ENCODE measurements at regions of chr2 and their contacts with region 1.

Region 1: DNA sequence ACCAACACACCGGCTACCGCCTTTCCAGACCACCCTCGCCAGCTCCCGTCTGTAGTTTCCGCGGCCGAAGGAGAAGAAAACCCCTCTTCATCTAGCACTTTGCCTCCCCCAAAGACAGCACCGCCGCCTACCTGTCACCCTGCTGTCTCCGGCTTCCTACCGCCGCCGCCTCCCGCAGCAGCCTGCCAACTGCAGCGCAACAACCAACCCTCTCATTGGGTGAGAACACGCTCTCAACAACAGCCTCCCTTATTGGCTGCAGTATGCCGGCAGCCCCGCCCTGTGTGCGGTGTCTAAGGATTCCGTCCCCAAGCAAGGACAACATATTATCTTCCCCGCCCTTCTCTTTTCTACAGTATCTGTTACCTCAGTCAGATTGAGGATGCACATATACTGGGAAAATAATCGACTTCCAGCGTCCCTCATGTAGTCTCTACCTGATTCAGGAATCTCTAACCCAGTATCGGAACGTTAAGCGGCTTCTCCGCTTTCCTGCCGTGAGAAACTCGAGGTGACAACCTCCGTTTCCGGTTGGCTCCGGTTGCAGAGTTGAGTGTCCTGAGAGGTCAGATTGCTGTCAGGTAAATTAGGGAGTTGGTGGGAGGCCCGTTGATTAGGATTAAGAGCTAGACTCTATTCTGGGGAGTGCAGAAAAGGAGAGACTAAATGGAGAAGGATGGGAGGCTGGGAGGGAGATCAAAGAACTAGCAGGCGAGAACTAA is at the starts of genes HYCC2 and NDUFB3:
- DNase-seq: peak; percentile 93
- H3K4me3 Mint-ChIP-seq: peak within 1 kb of the TSS; percentile 81
- H3K27ac Mint-ChIP-seq: peak within 1 kb of the TSS; percentile 89
- H3K4me1 Mint-ChIP-seq: peaks cover 25% of the 10 kb centered on the region
- H3K27me3 Mint-ChIP-seq: no peaks in the 10 kb centered on the region
- CTCF ChIP-seq: no peak
- total RNA-seq, gene HYCC2: 13.7 and 13.9 TPM in 2 replicates
- total RNA-seq, gene NDUFB3: 78.0 and 94.9 TPM in 2 replicates

Region 2: GRCh38 chr2:200864176-200864976 is 207.3 kb before region 1 on chr2 and contains the start of gene CLK1:
- CTCF ChIA-PET with region 1: interaction called, 3 read pairs
- POLR2A ChIA-PET with region 1: interaction called, 32 read pairs
- intact Hi-C with region 1: no loop called
- DNase-seq: peak; percentile 91
- H3K4me3 Mint-ChIP-seq: peak within 1 kb of the TSS; percentile 86
- H3K27ac Mint-ChIP-seq: peak within 1 kb of the TSS; percentile 99
- H3K4me1 Mint-ChIP-seq: peaks cover 16% of the 10 kb centered on the region
- H3K27me3 Mint-ChIP-seq: no peaks in the 10 kb centered on the region
- CTCF ChIP-seq: no peak
- total RNA-seq, gene CLK1: 102 and 118 TPM in 2 replicates

Region 3: GRCh38 chr2:200913654-200914053 is 158.0 kb before region 1 on chr2:
- CTCF ChIA-PET with region 1: interaction called, 10 read pairs
- POLR2A ChIA-PET with region 1: interaction called, 6 read pairs
- intact Hi-C with region 1: no loop called
- DNase-seq: no peak
- H3K4me3 Mint-ChIP-seq: no peak overlapping the region
- H3K27ac Mint-ChIP-seq: no peak overlapping the region
- H3K4me1 Mint-ChIP-seq: no peaks in the 10 kb centered on the region
- H3K27me3 Mint-ChIP-seq: no peaks in the 10 kb centered on the region
- CTCF ChIP-seq: no peak

Region 4: DNA sequence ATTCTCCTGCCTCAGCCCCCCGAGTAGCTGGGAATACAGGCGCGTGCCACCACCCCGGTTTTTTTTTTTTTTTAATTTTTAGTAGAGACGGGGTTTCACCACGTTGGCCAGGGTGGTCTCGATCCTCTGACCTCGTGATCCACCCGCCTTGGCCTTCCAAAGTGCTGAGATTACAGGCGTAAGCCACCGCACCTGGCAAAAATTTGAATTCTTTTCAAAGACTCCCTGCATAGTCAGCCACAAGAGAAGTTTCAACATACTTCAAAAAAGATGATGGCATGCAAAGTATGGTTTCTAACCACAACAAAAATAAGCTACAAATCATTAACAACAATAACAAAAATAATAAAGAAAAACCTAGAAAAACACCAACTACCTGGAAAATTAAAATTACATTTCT is 22.2 kb before region 1 on chr2:
- CTCF ChIA-PET with region 1: interaction called, 14 read pairs
- POLR2A ChIA-PET with region 1: interaction called, 4 read pairs
- intact Hi-C with region 1: no loop called
- DNase-seq: no peak
- H3K4me3 Mint-ChIP-seq: no peak overlapping the region
- H3K27ac Mint-ChIP-seq: no peak overlapping the region
- H3K4me1 Mint-ChIP-seq: no peaks in the 10 kb centered on the region
- H3K27me3 Mint-ChIP-seq: no peaks in the 10 kb centered on the region
- CTCF ChIP-seq: no peak

Region 5: DNA sequence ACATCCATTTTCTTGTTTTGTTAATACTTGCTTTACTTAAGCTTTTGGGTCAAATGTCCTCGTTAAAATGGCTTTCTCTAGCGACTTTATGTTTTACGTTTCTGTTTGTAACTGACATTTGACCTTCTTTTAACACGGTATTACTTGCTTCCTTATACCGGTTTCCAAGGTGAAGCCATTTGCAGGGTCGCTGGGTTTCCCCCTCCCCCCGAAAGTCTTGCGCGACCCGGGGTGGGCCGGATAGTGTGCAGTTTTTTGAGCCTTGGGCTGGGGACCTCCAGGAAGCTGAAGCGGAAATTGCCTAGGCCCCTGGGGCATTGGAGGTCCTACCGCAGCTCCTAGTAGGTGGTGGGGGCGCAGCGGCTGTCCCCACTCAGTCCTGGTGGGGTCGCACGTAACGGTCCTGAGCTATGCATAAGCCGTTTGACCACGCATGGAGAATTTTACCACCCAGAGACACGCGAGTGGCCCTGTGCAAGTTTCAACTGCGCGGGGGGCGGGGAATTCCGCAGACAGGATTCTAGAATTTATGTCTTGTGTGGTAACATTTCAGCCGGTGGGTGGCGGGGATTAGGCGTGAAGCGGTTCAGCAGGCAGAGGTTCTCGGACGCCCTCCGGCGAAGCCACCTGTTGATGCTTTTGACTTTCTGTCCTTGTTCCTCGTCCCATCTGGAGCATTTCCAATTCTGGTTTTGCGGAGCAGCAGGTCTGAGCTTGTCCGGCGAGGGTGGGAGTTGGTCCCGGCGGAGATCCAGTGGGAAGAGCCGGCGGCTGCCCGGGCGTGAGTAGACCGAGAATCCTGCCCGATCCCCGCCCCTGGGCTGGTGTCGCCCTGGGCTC is 46.7 kb after region 1 on chr2:
- CTCF ChIA-PET with region 1: interaction called, 13 read pairs
- POLR2A ChIA-PET with region 1: interaction called, 175 read pairs
- intact Hi-C with region 1: loop called (anchors 2 kb)
- DNase-seq: peak; percentile 98
- H3K4me3 Mint-ChIP-seq: peak overlapping the region; percentile 93
- H3K27ac Mint-ChIP-seq: peak overlapping the region; percentile 98
- H3K4me1 Mint-ChIP-seq: peaks cover 31% of the 10 kb centered on the region
- H3K27me3 Mint-ChIP-seq: no peaks in the 10 kb centered on the region
- CTCF ChIP-seq: peak; percentile 36

Region 6: DNA sequence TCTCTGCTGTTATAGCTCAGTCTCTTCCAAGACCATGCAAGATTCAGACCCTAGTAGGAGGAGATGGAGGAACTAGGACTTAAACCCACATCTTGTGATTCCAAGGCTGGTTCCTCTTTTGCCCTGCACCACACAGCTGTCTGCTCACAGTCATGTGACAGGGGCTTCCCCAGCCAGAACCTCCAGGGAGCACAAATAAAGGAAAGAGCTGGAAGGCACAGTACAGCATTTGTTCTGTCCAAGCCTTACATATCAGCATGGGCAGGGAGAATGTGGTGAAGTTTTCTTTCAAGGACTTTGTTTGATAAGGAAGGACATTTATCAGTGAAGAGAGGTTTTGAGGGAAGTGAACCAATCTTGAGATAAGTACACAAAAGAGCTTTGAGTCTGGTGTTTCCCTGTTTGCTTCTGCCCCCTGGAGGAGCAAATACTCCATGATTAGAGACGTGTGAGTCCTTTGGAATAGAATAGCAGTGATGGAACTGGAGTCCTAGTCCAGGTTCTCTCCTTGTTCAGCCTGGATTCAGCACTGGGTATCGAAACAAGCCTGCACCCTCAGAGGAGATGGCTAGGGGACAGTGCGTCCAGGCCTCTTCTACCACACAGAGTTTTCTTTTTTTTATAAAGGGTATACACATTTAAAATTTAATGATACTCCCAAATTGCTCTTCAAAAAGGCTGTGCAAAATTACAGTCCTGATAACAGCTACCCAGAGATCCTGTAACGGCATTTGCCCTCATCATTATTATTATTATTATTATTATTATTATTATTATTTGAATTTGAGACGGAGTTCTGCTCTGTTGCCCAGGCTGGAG is 86.7 kb after region 1 on chr2:
- CTCF ChIA-PET with region 1: interaction called, 31 read pairs
- POLR2A ChIA-PET with region 1: interaction called, 35 read pairs
- intact Hi-C with region 1: loop called (anchors 1 kb)
- DNase-seq: peak; percentile 87
- H3K4me3 Mint-ChIP-seq: no peak overlapping the region
- H3K27ac Mint-ChIP-seq: peak overlapping the region; percentile 69
- H3K4me1 Mint-ChIP-seq: peaks cover 8% of the 10 kb centered on the region
- H3K27me3 Mint-ChIP-seq: no peaks in the 10 kb centered on the region
- CTCF ChIP-seq: peak; percentile 62

Region 7: GRCh38 chr2:201298462-201299052 is 226.9 kb after region 1 on chr2:
- CTCF ChIA-PET with region 1: no interaction called
- POLR2A ChIA-PET with region 1: no interaction called
- intact Hi-C with region 1: no loop called
- DNase-seq: peak; percentile 12
- H3K4me3 Mint-ChIP-seq: no peak overlapping the region
- H3K27ac Mint-ChIP-seq: no peak overlapping the region
- H3K4me1 Mint-ChIP-seq: no peaks in the 10 kb centered on the region
- H3K27me3 Mint-ChIP-seq: no peaks in the 10 kb centered on the region
- CTCF ChIP-seq: no peak

Measured in MCF 10A (cell line).